Activated CD4-positive, alpha-beta T cell treated with anti-CD3 and anti-CD28 coated beads, Interleukin-2, amount 10 ng/mL, durations not matched to agents 24 days and 14 days (primary cell): ENCODE measurements at regions of chr12 and their contacts with region 1.

Region 1: DNA sequence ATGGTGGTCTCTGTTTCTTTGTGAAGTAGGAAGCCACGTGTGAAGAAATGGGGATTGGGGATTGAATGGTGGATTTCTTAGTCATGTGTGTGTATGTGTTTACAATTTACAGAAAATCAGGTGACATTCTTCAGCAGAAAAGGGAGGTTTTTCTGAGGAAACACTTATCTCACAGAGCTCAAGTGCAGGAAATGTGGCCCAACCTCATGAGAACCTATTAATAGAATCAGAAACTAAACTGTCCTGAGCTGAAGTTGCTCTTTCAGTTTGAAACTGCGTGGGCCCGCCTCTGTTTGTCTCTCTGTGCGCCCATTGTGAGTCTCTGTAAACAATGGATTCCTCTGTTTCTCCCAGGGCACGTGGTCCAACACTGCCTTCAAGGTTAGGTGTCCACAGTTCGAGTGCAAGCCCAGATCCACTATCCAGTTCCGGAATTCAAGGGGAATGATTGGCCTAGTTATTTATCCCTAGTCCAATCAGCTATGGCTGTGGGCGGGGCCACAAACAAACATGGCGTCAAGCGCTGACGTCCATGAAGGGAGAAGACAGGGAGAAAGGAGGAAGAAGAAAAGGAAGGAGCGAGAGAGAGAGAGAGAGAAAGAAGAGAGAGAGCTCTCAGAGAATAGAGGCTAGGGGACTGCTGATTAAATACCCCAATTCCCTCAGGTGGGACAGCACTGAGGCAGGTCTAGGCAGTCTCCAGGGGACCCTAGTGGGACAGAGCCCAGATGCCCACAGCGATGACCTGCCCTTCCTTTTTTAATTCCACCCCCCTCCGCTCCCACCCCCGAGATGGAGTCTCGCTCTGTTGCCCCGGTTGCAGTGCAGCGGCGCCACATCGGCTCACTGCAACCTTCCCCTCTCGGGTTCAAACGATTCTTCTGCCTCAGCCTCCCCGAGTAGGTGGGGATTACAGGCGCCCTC is 31.4 kb upstream of the C12orf76 start:
- DNase-seq: peak; percentile 93
- H3K4me3 Mint-ChIP-seq: peak overlapping the region; percentile 72
- H3K27ac Mint-ChIP-seq: peak overlapping the region; percentile 95
- H3K4me1 Mint-ChIP-seq: peaks cover 35% of the 10 kb centered on the region
- H3K27me3 Mint-ChIP-seq: no peaks in the 10 kb centered on the region

Region 2: DNA sequence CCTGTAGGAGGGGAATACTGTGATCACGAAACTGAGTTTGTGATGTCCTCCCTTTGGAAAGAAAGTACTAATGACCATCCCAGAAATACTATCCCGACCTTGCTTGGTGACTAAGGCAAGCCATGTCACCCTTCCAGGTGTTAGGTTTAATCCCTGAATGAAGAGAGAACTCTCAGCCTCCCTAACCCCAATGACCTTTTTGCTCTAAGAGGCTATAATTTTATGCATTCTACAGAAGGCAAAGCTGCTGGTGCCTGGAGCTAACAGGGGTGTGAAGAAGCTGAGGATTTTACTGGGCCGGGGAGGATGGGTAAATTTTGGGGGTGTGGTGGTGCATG is 23.6 kb before region 1 on chr12:
- intact Hi-C with region 1: loop called (anchors 1 kb)
- DNase-seq: no peak
- H3K4me3 Mint-ChIP-seq: no peak overlapping the region
- H3K27ac Mint-ChIP-seq: peak overlapping the region; percentile 90
- H3K4me1 Mint-ChIP-seq: peaks cover 41% of the 10 kb centered on the region
- H3K27me3 Mint-ChIP-seq: no peaks in the 10 kb centered on the region

Region 3: DNA sequence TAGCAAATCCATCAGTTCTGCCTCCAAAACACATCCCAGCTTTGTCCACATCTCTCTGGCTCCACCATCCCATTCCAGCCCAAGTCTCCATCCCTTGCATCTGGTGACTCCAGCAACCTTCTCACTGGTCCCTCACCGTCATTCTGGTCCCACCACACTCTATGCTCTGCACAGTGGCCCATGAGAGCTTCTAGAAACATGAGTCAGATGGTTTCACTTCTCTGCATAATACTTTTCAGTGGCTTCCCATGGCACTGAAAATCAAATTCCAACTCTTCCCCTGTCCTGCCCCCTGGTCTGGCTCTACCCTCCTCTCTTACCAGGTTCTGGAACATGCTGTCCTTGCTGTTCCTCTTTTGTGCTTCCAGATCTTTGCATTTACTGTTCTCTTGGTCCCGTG is 14.2 kb before region 1 on chr12:
- intact Hi-C with region 1: loop called (anchors 1 kb)
- DNase-seq: no peak
- H3K4me3 Mint-ChIP-seq: no peak overlapping the region
- H3K27ac Mint-ChIP-seq: no peak overlapping the region
- H3K4me1 Mint-ChIP-seq: peaks cover 30% of the 10 kb centered on the region
- H3K27me3 Mint-ChIP-seq: no peaks in the 10 kb centered on the region